Activated B cell treated with CpG ODN at 0.5 μM for 24 hours (primary cell): ENCODE measurements at regions of chr17 and their contacts with region 1.

Region 1: DNA sequence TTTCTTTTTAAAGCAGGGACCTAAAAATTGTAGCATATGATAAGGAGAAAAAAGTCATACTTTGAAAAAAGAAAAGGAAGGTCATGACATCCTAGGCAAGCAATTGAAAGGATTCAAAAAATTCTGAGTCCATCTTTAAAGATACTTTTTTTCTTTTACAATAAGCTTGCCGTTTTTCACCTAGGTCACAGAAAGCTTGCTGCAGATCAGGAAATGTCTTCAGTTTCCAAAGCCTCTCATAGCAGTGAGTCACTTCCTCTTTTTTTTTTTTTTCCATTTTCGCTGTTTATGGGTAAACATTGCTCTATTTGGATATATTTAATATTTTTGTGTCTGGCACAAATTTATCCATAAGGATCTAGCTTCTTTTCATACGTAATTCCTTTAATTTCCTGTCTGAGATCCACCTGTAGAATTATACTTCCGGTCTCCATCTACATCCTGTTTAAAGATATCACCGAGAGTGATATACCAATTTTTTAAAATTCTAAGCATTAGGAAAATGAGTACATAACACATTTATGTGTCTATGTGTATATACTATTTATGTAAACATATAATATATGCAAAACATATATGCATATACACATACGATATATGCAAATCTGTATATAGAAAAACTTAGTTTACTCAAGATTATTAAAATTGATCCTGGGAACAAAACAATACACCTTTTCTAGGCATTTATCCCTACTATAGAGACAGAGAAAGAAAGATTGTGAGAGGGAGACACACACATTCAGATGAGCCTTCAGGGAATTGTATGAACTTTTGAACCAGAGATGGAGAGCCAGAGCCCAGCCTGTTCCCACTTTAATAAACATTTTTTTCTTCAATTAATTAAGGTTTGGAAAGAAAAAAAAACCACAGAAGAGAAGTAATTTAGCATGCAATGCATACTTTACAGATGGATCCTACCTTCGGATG is 134.4 kb downstream of the SKAP1 start:
- DNase-seq: no peak
- ATAC-seq: peak; percentile 77
- H3K4me3 Mint-ChIP-seq: peak overlapping the region; percentile 81
- H3K27ac Mint-ChIP-seq: peak overlapping the region; percentile 90
- H3K4me1 Mint-ChIP-seq: peaks cover 24% of the 10 kb centered on the region
- H3K27me3 Mint-ChIP-seq: no peaks in the 10 kb centered on the region
- CTCF ChIP-seq: no peak

Region 2: DNA sequence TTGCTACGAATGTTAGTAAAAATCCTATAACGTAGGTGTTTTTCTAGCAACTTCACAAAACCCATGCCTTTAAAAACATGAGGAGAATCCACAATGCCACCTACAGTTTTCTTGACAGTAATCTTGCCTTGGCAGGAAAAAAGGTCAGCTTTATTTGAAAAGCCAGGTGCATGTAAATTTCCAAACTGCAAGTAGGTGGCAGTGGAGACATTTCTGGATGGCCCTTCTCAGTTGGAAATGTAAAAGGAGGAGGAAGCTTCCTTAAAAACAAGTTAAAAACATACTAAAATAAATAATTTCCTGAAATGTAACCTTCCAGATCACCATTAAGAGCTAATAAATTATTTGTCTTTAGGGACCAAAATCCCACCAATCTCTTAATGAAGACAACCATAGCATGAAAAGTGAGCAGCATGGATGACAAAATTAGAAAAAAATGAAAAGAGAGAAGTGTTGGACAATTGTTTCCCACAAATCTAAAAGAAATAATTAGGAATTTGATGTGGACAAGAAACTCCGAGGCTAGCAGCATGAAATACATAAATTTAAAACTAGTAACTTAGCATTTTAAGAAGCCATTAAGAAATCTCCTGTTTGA is 35.8 kb before region 1 on chr17:
- CTCF ChIA-PET with region 1: interaction called, 9 read pairs
- POLR2A ChIA-PET with region 1: no interaction called
- intact Hi-C with region 1: loop called (anchors 5 kb)
- DNase-seq: no peak
- ATAC-seq: no peak
- H3K4me3 Mint-ChIP-seq: no peak overlapping the region
- H3K27ac Mint-ChIP-seq: no peak overlapping the region
- H3K4me1 Mint-ChIP-seq: no peaks in the 10 kb centered on the region
- H3K27me3 Mint-ChIP-seq: no peaks in the 10 kb centered on the region
- CTCF ChIP-seq: no peak

Region 3: DNA sequence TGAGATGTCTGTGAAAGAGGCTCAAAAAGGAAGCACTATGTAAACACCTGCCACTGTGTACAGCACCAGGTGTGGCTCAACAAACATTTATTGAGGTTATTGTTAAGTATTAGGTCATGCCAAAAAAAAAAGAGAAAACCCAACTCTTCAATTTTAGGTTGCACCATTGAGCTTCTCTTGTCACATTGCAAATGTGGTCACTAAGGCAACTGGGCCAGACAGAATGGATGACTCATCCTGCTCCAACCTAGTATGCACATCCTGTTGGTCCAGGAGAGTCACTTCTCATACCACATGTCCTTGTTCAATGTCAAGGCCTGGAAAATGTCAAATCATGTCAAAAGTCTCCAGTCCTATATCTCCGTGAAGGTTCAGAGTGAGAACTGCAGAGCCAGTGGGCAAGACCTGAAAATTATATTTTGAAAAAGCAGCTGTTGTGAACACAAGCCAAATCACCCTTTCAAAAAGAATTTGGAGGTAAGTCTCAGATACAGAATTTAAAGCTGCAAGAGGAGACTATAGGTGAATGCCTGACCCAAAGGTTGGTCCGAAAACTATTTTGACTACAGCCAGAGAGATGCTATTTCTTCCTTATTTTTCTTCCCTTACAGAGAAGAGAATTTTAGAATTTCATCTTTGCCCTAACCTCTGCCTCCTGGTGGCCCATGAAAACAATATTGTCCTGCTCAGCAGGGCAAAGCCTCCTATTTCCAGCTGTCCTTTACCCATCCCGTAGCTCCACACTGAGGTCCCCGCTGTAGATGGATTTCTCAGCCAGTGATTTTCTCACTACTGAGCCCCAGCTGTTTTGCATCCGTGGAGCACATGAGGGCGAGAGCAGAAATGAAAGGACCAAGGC is 210.4 kb after region 1 on chr17:
- CTCF ChIA-PET with region 1: no interaction called
- POLR2A ChIA-PET with region 1: no interaction called
- intact Hi-C with region 1: no loop called
- DNase-seq: no peak
- ATAC-seq: peak; percentile 40
- H3K4me3 Mint-ChIP-seq: no peak overlapping the region
- H3K27ac Mint-ChIP-seq: no peak overlapping the region
- H3K4me1 Mint-ChIP-seq: peaks cover 3% of the 10 kb centered on the region
- H3K27me3 Mint-ChIP-seq: peaks cover 15% of the 10 kb centered on the region
- CTCF ChIP-seq: no peak